PC-9 (cell line): ENCODE measurements at regions of chr11 and their contacts with region 1.

Region 1: GRCh38 chr11:44884056-44884455 is 66.6 kb downstream of the TP53I11 start:
- DNase-seq: no peak
- H3K4me3 ChIP-seq: no peak overlapping the region
- H3K27ac ChIP-seq: no peak overlapping the region
- H3K4me1 ChIP-seq: no peaks in the 10 kb centered on the region
- H3K27me3 ChIP-seq: peaks cover 91% of the 10 kb centered on the region
- CTCF ChIP-seq: no peak

Region 2: GRCh38 chr11:45444796-45445195 is 560.7 kb after region 1 on chr11:
- CTCF ChIA-PET with region 1: no interaction called
- POLR2A ChIA-PET with region 1: interaction called, 12 read pairs
- intact Hi-C with region 1: no loop called
- DNase-seq: no peak
- H3K4me3 ChIP-seq: no peak overlapping the region
- H3K27ac ChIP-seq: no peak overlapping the region
- H3K4me1 ChIP-seq: no peaks in the 10 kb centered on the region
- H3K27me3 ChIP-seq: peaks cover 86% of the 10 kb centered on the region
- CTCF ChIP-seq: no peak